SK-N-SH (cell line): ENCODE measurements at regions of chr7 and their contacts with region 1.

Region 1: GRCh38 chr7:74417419-74417971 is 36.2 kb upstream of the GTF2IRD1 start:
- DNase-seq: peak; percentile 97
- H3K4me3 ChIP-seq: peak overlapping the region in 1 of 2 experiments; percentile 6; a peak in 1 of 4 replicates
- H3K27ac ChIP-seq: no peak overlapping the region
- H3K4me1 ChIP-seq: peaks cover 0 to 3% of the 10 kb centered on the region in 2 experiments; a peak in 1 of 4 replicates
- H3K27me3 ChIP-seq: no peaks in the 10 kb centered on the region
- CTCF ChIP-seq: peak; percentile 99
- EP300 ChIP-seq: no peak
- RAD21 ChIP-seq: peak; percentile 100

Region 2: DNA sequence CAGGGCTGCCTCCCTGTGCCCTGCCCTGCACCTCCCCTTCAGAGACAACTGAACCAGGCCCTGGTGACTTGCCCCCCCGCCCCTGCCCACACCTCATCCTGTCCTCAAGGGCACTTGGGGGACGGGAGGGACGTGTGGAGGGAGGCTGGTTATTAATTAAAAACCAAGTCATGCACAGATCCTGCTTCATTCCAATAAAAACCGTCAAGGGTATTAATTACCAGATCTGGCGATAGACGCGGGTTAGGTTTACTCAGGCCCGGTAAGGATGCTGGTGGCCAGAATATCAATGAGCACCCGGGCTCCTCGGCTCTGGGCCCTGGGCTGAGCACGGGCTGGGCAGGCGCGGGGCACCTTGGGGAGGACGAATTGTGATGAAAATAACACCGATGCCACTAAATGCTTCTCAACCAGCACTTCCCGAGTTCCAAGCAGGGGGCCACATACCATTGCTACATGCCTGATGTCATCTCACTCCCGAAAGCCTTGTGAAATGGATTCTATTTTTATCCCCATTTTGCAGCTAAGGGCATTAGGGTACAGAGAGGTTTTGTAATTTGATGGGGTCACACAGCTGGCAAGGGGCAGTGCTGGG is 11.8 kb after region 1 on chr7:
- CTCF ChIA-PET with region 1: interaction called, 32 read pairs
- POLR2A ChIA-PET with region 1: no interaction called
- DNase-seq: peak; percentile 36
- H3K4me3 ChIP-seq: no peak overlapping the region
- H3K27ac ChIP-seq: no peak overlapping the region
- H3K4me1 ChIP-seq: peaks cover 0 to 8% of the 10 kb centered on the region in 2 experiments; a peak in 2 of 4 replicates
- H3K27me3 ChIP-seq: no peaks in the 10 kb centered on the region
- CTCF ChIP-seq: no peak
- EP300 ChIP-seq: no peak
- RAD21 ChIP-seq: no peak

Region 3: GRCh38 chr7:74544706-74545469 is 127.4 kb after region 1 on chr7:
- CTCF ChIA-PET with region 1: interaction called, 13 read pairs
- POLR2A ChIA-PET with region 1: no interaction called
- DNase-seq: peak; percentile 77
- H3K4me3 ChIP-seq: no peak overlapping the region
- H3K27ac ChIP-seq: no peak overlapping the region
- H3K4me1 ChIP-seq: peaks cover 0 to 2% of the 10 kb centered on the region in 2 experiments; a peak in 1 of 4 replicates
- H3K27me3 ChIP-seq: no peaks in the 10 kb centered on the region
- CTCF ChIP-seq: peak; percentile 62
- EP300 ChIP-seq: no peak
- RAD21 ChIP-seq: peak; percentile 72